Colonic mucosa (tissue), 4 donors: ENCODE measurements at regions of chr4 and their contacts with region 1.

Region 1: GRCh38 chr4:41281038-41281634 is 24.4 kb downstream of the UCHL1 start:
- DNase-seq: peak; percentile 57
- H3K4me3 ChIP-seq: no peak overlapping the region
- H3K27ac ChIP-seq: no peak overlapping the region
- H3K4me1 ChIP-seq: no peaks in the 10 kb centered on the region
- H3K27me3 ChIP-seq: no peaks in the 10 kb centered on the region
- CTCF ChIP-seq: peak; percentile 70

Region 2: GRCh38 chr4:41644288-41644914 is 363.3 kb after region 1 on chr4:
- intact Hi-C with region 1: loop called (anchors 2 kb)
- DNase-seq: peak; percentile 68
- H3K4me3 ChIP-seq: no peak overlapping the region
- H3K27ac ChIP-seq: no peak overlapping the region
- H3K4me1 ChIP-seq: peaks cover 5% of the 10 kb centered on the region
- H3K27me3 ChIP-seq: no peaks in the 10 kb centered on the region
- CTCF ChIP-seq: peak; percentile 89

Region 3: DNA sequence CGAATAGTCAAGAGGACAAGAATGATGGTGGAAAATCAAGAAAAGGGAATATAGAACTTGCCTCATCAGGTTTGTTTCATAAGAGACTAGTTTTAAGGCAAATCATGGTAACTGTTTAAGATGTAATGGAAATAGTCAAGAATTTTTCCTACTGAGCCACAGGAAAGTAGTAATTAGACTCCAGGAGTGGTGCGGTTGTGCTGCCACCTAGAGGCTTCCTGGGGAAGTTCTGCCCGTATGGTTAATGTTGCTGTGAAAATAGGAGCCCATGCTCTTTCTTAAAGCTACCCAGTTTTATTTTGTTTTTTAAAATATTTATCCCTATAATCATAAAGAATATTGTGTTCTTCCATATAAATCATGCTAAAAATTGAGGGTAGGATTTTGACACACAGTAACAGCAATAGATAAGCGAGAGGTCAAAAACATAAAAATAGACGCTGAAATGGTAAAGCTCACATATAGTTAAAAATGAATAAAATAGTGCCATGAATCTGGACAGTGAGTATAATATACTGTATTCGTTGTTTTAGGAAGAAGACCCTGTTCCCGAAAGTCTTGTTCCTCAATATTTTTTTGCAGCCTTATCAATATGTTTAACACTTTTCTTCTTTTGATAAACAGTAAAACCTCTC is 380.4 kb after region 1 on chr4:
- intact Hi-C with region 1: loop called (anchors 5 kb)
- DNase-seq: peak; percentile 65
- H3K4me3 ChIP-seq: no peak overlapping the region
- H3K27ac ChIP-seq: no peak overlapping the region
- H3K4me1 ChIP-seq: no peaks in the 10 kb centered on the region
- H3K27me3 ChIP-seq: no peaks in the 10 kb centered on the region
- CTCF ChIP-seq: peak; percentile 94

Region 4: GRCh38 chr4:41887821-41888686 is 606.9 kb after region 1 on chr4:
- intact Hi-C with region 1: loop called (anchors 5 kb)
- DNase-seq: peak; percentile 35
- H3K4me3 ChIP-seq: no peak overlapping the region
- H3K27ac ChIP-seq: no peak overlapping the region
- H3K4me1 ChIP-seq: no peaks in the 10 kb centered on the region
- H3K27me3 ChIP-seq: no peaks in the 10 kb centered on the region
- CTCF ChIP-seq: peak; percentile 90